Naive thymus-derived CD4-positive, alpha-beta T cell (primary cell): ENCODE measurements at regions of chr18 and their contacts with region 1.

Region 1: GRCh38 chr18:58768293-58768974 is 96.2 kb upstream of the ZNF532 start:
- DNase-seq: peak; percentile 40 to 71 (median 60)
- ATAC-seq: peak; percentile 89
- H3K4me3 ChIP-seq: no peak overlapping the region
- H3K4me3 Mint-ChIP-seq: peak overlapping the region in 8 of 10 donors; percentile 36 to 81 (median 66)
- H3K27ac ChIP-seq: no peak overlapping the region
- H3K27ac Mint-ChIP-seq: no peak overlapping the region
- H3K4me1 ChIP-seq: peaks cover 6 to 17% of the 10 kb centered on the region in 2 donors
- H3K4me1 Mint-ChIP-seq: peaks cover 0 to 19% (median 16%) of the 10 kb centered on the region in 7 donors
- H3K27me3 ChIP-seq: peaks cover 0 to 10% of the 10 kb centered on the region in 2 donors
- H3K27me3 Mint-ChIP-seq: peaks cover 30 to 63% (median 37%) of the 10 kb centered on the region in 5 donors

Region 2: DNA sequence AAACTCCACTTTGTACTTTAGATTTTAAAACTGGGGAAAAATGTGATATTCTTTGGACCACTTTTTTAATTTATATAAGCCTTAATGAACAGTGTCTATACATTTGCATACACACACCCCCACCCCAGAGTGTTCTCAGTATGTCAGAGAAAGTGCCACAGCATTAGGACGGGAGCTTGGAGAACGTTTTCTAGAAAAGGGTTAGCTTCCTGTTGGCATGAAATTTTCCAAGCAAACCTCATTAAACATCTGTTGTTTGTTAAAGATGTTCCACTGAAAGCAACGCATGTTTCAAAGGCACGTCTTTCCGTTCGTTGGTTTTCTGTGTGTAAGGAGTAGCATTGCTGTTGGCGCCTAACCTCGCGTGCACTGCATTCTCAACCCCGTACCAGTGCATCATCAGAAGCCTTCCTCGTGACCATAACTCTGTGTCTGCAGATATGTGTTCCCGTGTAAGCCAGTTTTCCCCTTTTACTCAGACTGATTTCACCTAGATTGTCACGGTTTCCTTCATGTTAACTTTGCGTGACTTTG is 368.0 kb before region 1 on chr18:
- CTCF ChIA-PET with region 1: interaction called, 4 read pairs
- POLR2A ChIA-PET with region 1: no interaction called
- intact Hi-C with region 1: loop called (anchors 1 kb)
- DNase-seq: peak in 4 of 9 donors; percentile 10 to 26 (median 20)
- ATAC-seq: peak; percentile 44
- H3K4me3 ChIP-seq: no peak overlapping the region
- H3K4me3 Mint-ChIP-seq: peak overlapping the region in 9 of 10 donors; percentile 22 to 71 (median 60)
- H3K27ac ChIP-seq: no peak overlapping the region
- H3K27ac Mint-ChIP-seq: peak overlapping the region in 8 of 9 donors; percentile 41 to 88 (median 83)
- H3K4me1 ChIP-seq: peaks cover 0 to 3% of the 10 kb centered on the region in 2 donors
- H3K4me1 Mint-ChIP-seq: peaks cover 6 to 36% (median 30%) of the 10 kb centered on the region in 7 donors
- H3K27me3 ChIP-seq: no peaks in the 10 kb centered on the region
- H3K27me3 Mint-ChIP-seq: peaks cover 0 to 3% (median 0%) of the 10 kb centered on the region in 5 donors

Region 3: DNA sequence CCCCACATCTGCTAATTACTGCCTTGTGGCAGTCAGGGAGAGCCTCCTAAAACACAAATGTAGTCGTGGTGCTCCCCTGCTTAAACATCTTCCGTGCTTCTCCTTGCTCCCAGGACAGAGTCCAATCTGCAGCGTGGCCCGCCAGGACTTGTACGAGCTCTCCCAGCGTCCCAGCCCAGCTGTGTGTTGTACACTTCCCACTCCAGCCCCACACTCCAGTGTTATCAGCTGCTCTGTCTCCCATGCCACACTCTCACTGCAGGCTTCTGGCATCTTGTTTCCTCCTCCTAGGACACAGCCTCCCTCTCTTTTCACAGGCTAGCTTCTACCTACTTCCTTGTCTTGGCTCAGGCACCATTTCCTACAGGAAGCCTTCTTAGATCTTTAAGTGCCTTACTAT is 339.0 kb before region 1 on chr18:
- CTCF ChIA-PET with region 1: no interaction called
- POLR2A ChIA-PET with region 1: no interaction called
- intact Hi-C with region 1: no loop called
- DNase-seq: no peak
- ATAC-seq: no peak
- H3K4me3 ChIP-seq: no peak overlapping the region
- H3K4me3 Mint-ChIP-seq: no peak overlapping the region
- H3K27ac ChIP-seq: no peak overlapping the region
- H3K27ac Mint-ChIP-seq: no peak overlapping the region
- H3K4me1 ChIP-seq: no peaks in the 10 kb centered on the region
- H3K4me1 Mint-ChIP-seq: peaks cover 0 to 8% (median 0%) of the 10 kb centered on the region in 7 donors
- H3K27me3 ChIP-seq: no peaks in the 10 kb centered on the region
- H3K27me3 Mint-ChIP-seq: peaks cover 0 to 6% (median 0%) of the 10 kb centered on the region in 5 donors

Region 4: DNA sequence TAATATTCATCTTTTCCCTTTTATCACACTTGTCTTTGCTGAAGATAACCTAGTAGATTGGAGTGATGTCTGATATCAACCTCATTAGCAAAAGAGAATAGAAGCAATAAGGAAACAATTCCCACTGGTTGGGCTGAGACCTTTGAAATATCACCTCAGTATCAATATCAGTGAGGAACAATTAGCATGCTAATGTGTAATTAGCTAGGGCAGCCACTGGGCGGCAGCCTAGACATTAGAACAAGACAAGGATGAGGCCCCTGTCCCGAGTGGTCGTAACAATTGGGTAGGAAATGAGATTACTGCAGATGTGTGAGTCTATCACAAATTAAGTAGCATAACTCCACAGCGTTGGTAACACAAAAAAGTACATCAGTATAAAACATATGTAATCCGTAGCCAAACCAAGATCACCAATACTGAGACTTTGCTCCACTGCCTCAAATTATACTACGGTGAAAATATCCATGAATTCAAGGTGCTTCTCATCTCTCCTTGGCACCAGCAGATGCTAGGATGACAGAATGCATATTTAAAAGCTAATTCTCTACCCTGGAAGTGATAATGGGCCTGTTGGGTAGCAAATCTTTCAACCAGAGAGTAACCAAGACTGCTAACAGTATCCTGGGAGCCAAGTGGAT is 238.6 kb before region 1 on chr18:
- CTCF ChIA-PET with region 1: interaction called, 148 read pairs
- POLR2A ChIA-PET with region 1: interaction called, 11 read pairs
- intact Hi-C with region 1: loop called (anchors 1 kb)
- DNase-seq: peak; percentile 39 to 71 (median 60)
- ATAC-seq: peak; percentile 87
- H3K4me3 ChIP-seq: no peak overlapping the region
- H3K4me3 Mint-ChIP-seq: no peak overlapping the region
- H3K27ac ChIP-seq: no peak overlapping the region
- H3K27ac Mint-ChIP-seq: no peak overlapping the region
- H3K4me1 ChIP-seq: no peaks in the 10 kb centered on the region
- H3K4me1 Mint-ChIP-seq: peaks cover 0 to 13% (median 6%) of the 10 kb centered on the region in 7 donors
- H3K27me3 ChIP-seq: no peaks in the 10 kb centered on the region
- H3K27me3 Mint-ChIP-seq: peaks cover 0 to 41% (median 0%) of the 10 kb centered on the region in 5 donors

Region 5: GRCh38 chr18:58615140-58616132 is 153.0 kb before region 1 on chr18:
- CTCF ChIA-PET with region 1: interaction called, 7 read pairs
- POLR2A ChIA-PET with region 1: no interaction called
- intact Hi-C with region 1: loop called (anchors 1 to 5 kb)
- DNase-seq: peak in 8 of 9 donors; percentile 15 to 65 (median 50)
- ATAC-seq: peak; percentile 92
- H3K4me3 ChIP-seq: peak overlapping the region; percentile 11
- H3K4me3 Mint-ChIP-seq: peak overlapping the region; percentile 67 to 88 (median 81)
- H3K27ac ChIP-seq: peak overlapping the region; percentile 65
- H3K27ac Mint-ChIP-seq: peak overlapping the region; percentile 85 to 98 (median 95)
- H3K4me1 ChIP-seq: peaks cover 23 to 36% of the 10 kb centered on the region in 2 donors
- H3K4me1 Mint-ChIP-seq: peaks cover 32 to 58% (median 48%) of the 10 kb centered on the region in 7 donors
- H3K27me3 ChIP-seq: no peaks in the 10 kb centered on the region
- H3K27me3 Mint-ChIP-seq: peaks cover 0 to 29% (median 0%) of the 10 kb centered on the region in 5 donors

Region 6: DNA sequence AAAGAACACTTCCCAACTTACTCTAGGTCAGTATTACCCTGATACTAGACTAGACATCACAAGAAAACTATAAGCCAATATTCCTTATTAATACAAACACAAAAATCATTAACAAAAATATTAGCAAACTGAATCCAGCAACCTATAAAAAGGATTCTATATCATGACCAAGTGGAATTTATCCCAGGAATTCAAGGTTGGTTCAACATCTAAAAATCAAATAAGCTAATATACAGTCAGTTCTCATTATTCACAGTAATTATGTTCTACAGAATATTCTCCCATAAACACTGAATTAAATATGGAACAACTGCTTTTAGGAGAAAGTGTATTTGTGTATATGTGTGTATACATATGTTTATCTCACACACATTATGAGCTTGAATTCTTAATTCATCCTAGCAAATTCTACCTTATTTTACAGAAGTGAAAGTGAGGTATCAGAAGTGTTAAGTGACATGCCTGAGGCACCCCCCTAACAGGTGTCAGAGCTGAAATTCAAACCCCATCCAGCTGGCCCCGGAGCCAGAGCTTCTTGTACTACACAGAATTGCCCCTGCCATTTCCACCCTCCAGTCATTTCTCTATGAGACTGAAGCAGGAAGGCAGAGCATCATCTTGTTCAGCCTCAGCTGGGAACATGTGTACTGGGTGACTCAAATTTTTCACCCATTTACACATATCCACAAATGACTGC is 19.4 kb before region 1 on chr18:
- CTCF ChIA-PET with region 1: interaction called, 24 read pairs
- POLR2A ChIA-PET with region 1: no interaction called
- intact Hi-C with region 1: no loop called
- DNase-seq: no peak
- ATAC-seq: no peak
- H3K4me3 ChIP-seq: no peak overlapping the region
- H3K4me3 Mint-ChIP-seq: no peak overlapping the region
- H3K27ac ChIP-seq: no peak overlapping the region
- H3K27ac Mint-ChIP-seq: no peak overlapping the region
- H3K4me1 ChIP-seq: no peaks in the 10 kb centered on the region
- H3K4me1 Mint-ChIP-seq: peaks cover 0 to 6% (median 0%) of the 10 kb centered on the region in 7 donors
- H3K27me3 ChIP-seq: no peaks in the 10 kb centered on the region
- H3K27me3 Mint-ChIP-seq: no peaks in the 10 kb centered on the region

Region 7: GRCh38 chr18:58896268-58896667 is 127.8 kb after region 1 on chr18:
- CTCF ChIA-PET with region 1: no interaction called
- POLR2A ChIA-PET with region 1: no interaction called
- intact Hi-C with region 1: no loop called
- DNase-seq: no peak
- ATAC-seq: peak; percentile 36
- H3K4me3 ChIP-seq: no peak overlapping the region
- H3K4me3 Mint-ChIP-seq: no peak overlapping the region
- H3K27ac ChIP-seq: no peak overlapping the region
- H3K27ac Mint-ChIP-seq: peak overlapping the region in 1 of 9 donors; percentile 33
- H3K4me1 ChIP-seq: peaks cover 0 to 3% of the 10 kb centered on the region in 2 donors
- H3K4me1 Mint-ChIP-seq: peaks cover 10 to 21% (median 14%) of the 10 kb centered on the region in 7 donors
- H3K27me3 ChIP-seq: no peaks in the 10 kb centered on the region
- H3K27me3 Mint-ChIP-seq: peaks cover 3 to 17% (median 4%) of the 10 kb centered on the region in 5 donors

Region 8: GRCh38 chr18:59056706-59057492 is 288.5 kb after region 1 on chr18:
- CTCF ChIA-PET with region 1: interaction called, 4 read pairs
- POLR2A ChIA-PET with region 1: no interaction called
- intact Hi-C with region 1: loop called in 1 of 2 experiments (anchors 1 kb)
- DNase-seq: peak in 8 of 9 donors; percentile 7 to 52 (median 42)
- ATAC-seq: peak; percentile 70
- H3K4me3 ChIP-seq: no peak overlapping the region
- H3K4me3 Mint-ChIP-seq: no peak overlapping the region
- H3K27ac ChIP-seq: no peak overlapping the region
- H3K27ac Mint-ChIP-seq: no peak overlapping the region
- H3K4me1 ChIP-seq: no peaks in the 10 kb centered on the region
- H3K4me1 Mint-ChIP-seq: peaks cover 0 to 1% (median 0%) of the 10 kb centered on the region in 7 donors
- H3K27me3 ChIP-seq: no peaks in the 10 kb centered on the region
- H3K27me3 Mint-ChIP-seq: peaks cover 6 to 30% (median 17%) of the 10 kb centered on the region in 5 donors